B cell (primary cell): ENCODE measurements at regions of chr4 and their contacts with region 1.

Region 1: GRCh38 chr4:112765317-112765975 is 128.5 kb downstream of the LARP7 start:
- DNase-seq: peak; percentile 43
- ATAC-seq: peak; percentile 41
- H3K4me3 ChIP-seq: no peak overlapping the region
- H3K4me3 Mint-ChIP-seq: no peak overlapping the region
- H3K27ac ChIP-seq: no peak overlapping the region
- H3K27ac Mint-ChIP-seq: no peak overlapping the region
- H3K4me1 ChIP-seq: no peaks in the 10 kb centered on the region
- H3K4me1 Mint-ChIP-seq: no peaks in the 10 kb centered on the region
- H3K27me3 ChIP-seq: no peaks in the 10 kb centered on the region
- H3K27me3 Mint-ChIP-seq: peaks cover 4% of the 10 kb centered on the region
- CTCF ChIP-seq: peak; percentile 74

Region 2: GRCh38 chr4:111945014-111945413 is 820.4 kb before region 1 on chr4:
- CTCF ChIA-PET with region 1: no interaction called
- POLR2A ChIA-PET with region 1: no interaction called
- intact Hi-C with region 1: no loop called
- DNase-seq: no peak
- ATAC-seq: no peak
- H3K4me3 ChIP-seq: no peak overlapping the region
- H3K4me3 Mint-ChIP-seq: no peak overlapping the region
- H3K27ac ChIP-seq: no peak overlapping the region
- H3K27ac Mint-ChIP-seq: no peak overlapping the region
- H3K4me1 ChIP-seq: no peaks in the 10 kb centered on the region
- H3K4me1 Mint-ChIP-seq: no peaks in the 10 kb centered on the region
- H3K27me3 ChIP-seq: no peaks in the 10 kb centered on the region
- H3K27me3 Mint-ChIP-seq: peaks cover 4% of the 10 kb centered on the region
- CTCF ChIP-seq: no peak

Region 3: DNA sequence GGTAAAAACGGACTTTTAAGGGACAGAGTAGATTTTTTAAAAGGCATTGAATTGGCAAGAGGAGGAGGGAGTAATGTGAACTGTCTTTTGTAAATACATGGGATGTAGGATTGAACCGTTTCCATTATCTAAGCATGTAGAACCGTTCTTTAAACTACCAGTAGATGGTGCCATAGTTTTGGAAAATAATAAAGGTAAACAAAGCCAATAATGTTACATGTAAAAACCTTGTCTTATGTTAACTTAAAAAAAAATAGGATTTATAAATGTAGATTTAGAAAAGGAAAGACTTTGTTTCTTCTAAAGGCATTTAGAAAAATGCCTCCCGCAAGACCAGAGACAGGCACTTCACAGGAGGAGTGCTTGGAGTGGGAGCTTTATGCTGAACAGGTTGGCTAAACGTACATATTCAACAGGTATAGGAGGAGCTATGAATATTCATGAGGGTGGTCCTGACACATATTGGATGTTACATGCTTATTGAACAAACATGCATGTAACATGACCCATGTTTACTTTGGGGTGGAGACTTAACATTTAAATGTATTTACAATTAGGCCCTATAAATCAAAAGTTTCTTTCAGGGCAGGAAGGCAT is 665.6 kb before region 1 on chr4:
- CTCF ChIA-PET with region 1: interaction called, 9 read pairs
- POLR2A ChIA-PET with region 1: no interaction called
- intact Hi-C with region 1: loop called (anchors 2 kb)
- DNase-seq: peak; percentile 57
- ATAC-seq: peak; percentile 36
- H3K4me3 ChIP-seq: no peak overlapping the region
- H3K4me3 Mint-ChIP-seq: no peak overlapping the region
- H3K27ac ChIP-seq: no peak overlapping the region
- H3K27ac Mint-ChIP-seq: no peak overlapping the region
- H3K4me1 ChIP-seq: no peaks in the 10 kb centered on the region
- H3K4me1 Mint-ChIP-seq: no peaks in the 10 kb centered on the region
- H3K27me3 ChIP-seq: peaks cover 0 to 4% (median 0%) of the 10 kb centered on the region in 4 experiments
- H3K27me3 Mint-ChIP-seq: no peaks in the 10 kb centered on the region
- CTCF ChIP-seq: peak; percentile 78

Region 4: DNA sequence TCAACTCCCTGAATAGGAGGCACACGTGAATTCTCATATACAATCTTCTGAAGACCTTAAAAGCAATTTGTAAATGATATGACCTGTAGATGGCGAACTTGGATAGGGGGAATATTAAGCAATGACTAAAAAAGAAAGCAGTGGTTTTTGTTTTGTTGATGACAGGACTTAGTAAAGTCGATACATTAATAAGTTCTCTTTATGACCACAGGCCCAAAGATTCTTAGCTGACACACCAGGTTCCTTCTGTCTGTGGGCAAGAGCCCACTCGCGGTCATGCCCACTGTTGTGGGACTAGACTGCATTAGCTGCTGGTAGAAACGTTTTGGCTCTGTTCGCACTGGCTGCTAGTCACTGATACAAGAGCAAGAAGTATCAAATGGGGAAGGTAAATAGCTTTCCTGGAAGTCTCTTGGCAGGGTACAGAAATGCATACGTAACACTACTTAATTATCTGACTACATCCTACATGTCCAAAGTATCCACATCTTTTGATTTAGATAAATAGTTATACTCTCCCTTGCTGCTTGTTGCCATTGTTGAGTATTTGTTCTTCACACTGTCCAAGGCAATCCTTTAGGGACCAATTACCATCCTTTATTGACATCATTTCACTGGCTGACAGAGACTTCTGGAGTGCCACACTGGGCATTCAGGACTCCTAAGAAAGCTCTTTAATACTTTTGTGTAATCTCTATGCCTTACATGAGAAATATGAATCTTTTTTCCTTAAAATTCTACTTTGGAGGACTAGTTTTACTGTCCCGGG is 437.3 kb before region 1 on chr4:
- CTCF ChIA-PET with region 1: interaction called, 18 read pairs
- POLR2A ChIA-PET with region 1: no interaction called
- intact Hi-C with region 1: loop called (anchors 2 kb)
- DNase-seq: peak; percentile 70
- ATAC-seq: peak; percentile 47
- H3K4me3 ChIP-seq: no peak overlapping the region
- H3K4me3 Mint-ChIP-seq: peak overlapping the region; percentile 49
- H3K27ac ChIP-seq: no peak overlapping the region
- H3K27ac Mint-ChIP-seq: no peak overlapping the region
- H3K4me1 ChIP-seq: no peaks in the 10 kb centered on the region
- H3K4me1 Mint-ChIP-seq: peaks cover 5% of the 10 kb centered on the region
- H3K27me3 ChIP-seq: no peaks in the 10 kb centered on the region
- H3K27me3 Mint-ChIP-seq: no peaks in the 10 kb centered on the region
- CTCF ChIP-seq: peak; percentile 75

Region 5: GRCh38 chr4:112751447-112751846 is 14.0 kb before region 1 on chr4:
- CTCF ChIA-PET with region 1: interaction called, 14 read pairs
- POLR2A ChIA-PET with region 1: no interaction called
- intact Hi-C with region 1: no loop called
- DNase-seq: no peak
- ATAC-seq: no peak
- H3K4me3 ChIP-seq: no peak overlapping the region
- H3K4me3 Mint-ChIP-seq: no peak overlapping the region
- H3K27ac ChIP-seq: no peak overlapping the region
- H3K27ac Mint-ChIP-seq: no peak overlapping the region
- H3K4me1 ChIP-seq: no peaks in the 10 kb centered on the region
- H3K4me1 Mint-ChIP-seq: no peaks in the 10 kb centered on the region
- H3K27me3 ChIP-seq: peaks cover 0 to 10% (median 3%) of the 10 kb centered on the region in 4 experiments
- H3K27me3 Mint-ChIP-seq: peaks cover 18% of the 10 kb centered on the region
- CTCF ChIP-seq: no peak

Region 6: DNA sequence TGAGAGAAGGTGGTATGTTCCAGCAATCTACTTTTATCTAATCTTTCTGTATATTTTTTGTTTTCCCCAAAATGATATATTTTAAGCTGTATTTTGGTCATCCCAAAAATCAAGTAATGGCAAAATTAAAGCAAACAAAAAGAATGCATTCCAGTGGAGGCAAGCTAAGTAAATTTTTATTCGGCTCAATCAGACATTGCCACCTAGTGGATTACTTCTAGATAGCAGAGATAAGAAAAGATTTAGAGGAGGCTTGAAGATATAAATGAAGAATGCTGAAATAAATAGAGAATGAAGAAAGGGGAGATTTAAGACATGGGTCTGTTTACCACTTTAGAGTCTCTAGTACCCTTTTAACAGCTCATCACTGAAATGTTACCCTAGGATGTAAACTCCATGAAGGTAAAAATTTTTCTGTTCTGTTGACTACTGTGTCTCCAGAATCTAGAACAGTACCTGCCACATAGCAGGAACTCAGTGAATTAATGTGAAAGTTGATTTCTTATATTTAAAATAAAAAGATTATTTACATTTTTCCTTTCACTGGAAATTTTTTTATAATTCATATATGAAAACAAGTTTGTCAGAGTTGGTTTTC is 173.1 kb after region 1 on chr4:
- CTCF ChIA-PET with region 1: interaction called, 6 read pairs
- POLR2A ChIA-PET with region 1: no interaction called
- intact Hi-C with region 1: loop called (anchors 5 kb)
- DNase-seq: peak; percentile 18
- ATAC-seq: no peak
- H3K4me3 ChIP-seq: no peak overlapping the region
- H3K4me3 Mint-ChIP-seq: no peak overlapping the region
- H3K27ac ChIP-seq: no peak overlapping the region
- H3K27ac Mint-ChIP-seq: no peak overlapping the region
- H3K4me1 ChIP-seq: no peaks in the 10 kb centered on the region
- H3K4me1 Mint-ChIP-seq: no peaks in the 10 kb centered on the region
- H3K27me3 ChIP-seq: no peaks in the 10 kb centered on the region
- H3K27me3 Mint-ChIP-seq: peaks cover 2% of the 10 kb centered on the region
- CTCF ChIP-seq: peak; percentile 83

Region 7: GRCh38 chr4:113116414-113117357 is 351.2 kb after region 1 on chr4:
- CTCF ChIA-PET with region 1: no interaction called
- POLR2A ChIA-PET with region 1: no interaction called
- intact Hi-C with region 1: no loop called
- DNase-seq: no peak
- ATAC-seq: no peak
- H3K4me3 ChIP-seq: no peak overlapping the region
- H3K4me3 Mint-ChIP-seq: no peak overlapping the region
- H3K27ac ChIP-seq: no peak overlapping the region
- H3K27ac Mint-ChIP-seq: no peak overlapping the region
- H3K4me1 ChIP-seq: no peaks in the 10 kb centered on the region
- H3K4me1 Mint-ChIP-seq: no peaks in the 10 kb centered on the region
- H3K27me3 ChIP-seq: no peaks in the 10 kb centered on the region
- H3K27me3 Mint-ChIP-seq: no peaks in the 10 kb centered on the region
- CTCF ChIP-seq: no peak

Region 8: GRCh38 chr4:113858924-113859323 is 1093.5 kb after region 1 on chr4:
- CTCF ChIA-PET with region 1: no interaction called
- POLR2A ChIA-PET with region 1: no interaction called
- intact Hi-C with region 1: no loop called
- DNase-seq: no peak
- ATAC-seq: no peak
- H3K4me3 ChIP-seq: no peak overlapping the region
- H3K4me3 Mint-ChIP-seq: no peak overlapping the region
- H3K27ac ChIP-seq: no peak overlapping the region
- H3K27ac Mint-ChIP-seq: no peak overlapping the region
- H3K4me1 ChIP-seq: no peaks in the 10 kb centered on the region
- H3K4me1 Mint-ChIP-seq: no peaks in the 10 kb centered on the region
- H3K27me3 ChIP-seq: peaks cover 0 to 2% (median 0%) of the 10 kb centered on the region in 4 experiments
- H3K27me3 Mint-ChIP-seq: peaks cover 8% of the 10 kb centered on the region
- CTCF ChIP-seq: no peak